ENCODE measurements at regions of chr11 and their contacts with region 1.

Region 1: GRCh38 chr11:102940714-102941588 is 14.6 kb downstream of the MMP13 start:
- DNase-seq: peak; percentile 62
- ATAC-seq: peak; percentile 41
- H3K4me3 ChIP-seq: no peak overlapping the region
- H3K4me3 Mint-ChIP-seq: no peak overlapping the region
- H3K27ac ChIP-seq: no peak overlapping the region
- H3K27ac Mint-ChIP-seq: no peak overlapping the region
- H3K4me1 ChIP-seq: no peaks in the 10 kb centered on the region
- H3K4me1 Mint-ChIP-seq: no peaks in the 10 kb centered on the region
- H3K27me3 ChIP-seq: peaks cover 0 to 5% (median 0%) of the 10 kb centered on the region in 4 experiments
- H3K27me3 Mint-ChIP-seq: peaks cover 5% of the 10 kb centered on the region
- CTCF ChIP-seq: peak; percentile 92

Region 2: DNA sequence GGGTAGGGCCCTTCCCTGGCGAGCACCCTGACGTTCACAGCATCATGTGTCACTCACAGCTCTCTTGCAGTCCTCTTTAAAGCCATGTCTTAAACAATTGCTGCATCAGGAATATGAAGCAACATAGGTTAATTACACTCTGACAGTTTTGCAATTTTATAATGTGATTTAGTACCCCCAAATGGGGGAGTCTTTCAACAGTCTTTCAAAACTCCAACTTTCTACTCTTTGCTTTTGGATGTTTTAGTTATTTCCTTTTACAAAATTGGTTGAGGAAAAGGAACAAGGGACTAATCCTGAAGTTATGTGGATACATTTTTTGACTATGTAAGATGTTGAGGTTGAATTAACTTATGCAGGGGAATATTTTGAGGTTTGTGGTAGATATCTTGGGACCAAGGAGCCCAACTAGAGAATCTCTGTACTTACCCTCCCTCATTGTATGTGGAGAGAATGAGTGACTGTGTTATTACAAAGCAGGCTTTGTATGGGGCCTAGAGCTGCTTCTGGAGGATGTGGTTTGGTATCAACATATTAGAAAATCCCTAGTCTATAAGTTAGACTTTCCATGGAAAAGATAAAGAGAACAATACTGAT is 215.9 kb before region 1 on chr11 and contains the start of gene MMP8:
- CTCF ChIA-PET with region 1: no interaction called
- POLR2A ChIA-PET with region 1: no interaction called
- intact Hi-C with region 1: loop called (anchors 5 kb)
- DNase-seq: no peak
- ATAC-seq: no peak
- H3K4me3 ChIP-seq: no peak within 1 kb of the TSS
- H3K4me3 Mint-ChIP-seq: no peak within 1 kb of the TSS
- H3K27ac ChIP-seq: no peak within 1 kb of the TSS
- H3K27ac Mint-ChIP-seq: no peak within 1 kb of the TSS
- H3K4me1 ChIP-seq: no peaks in the 10 kb centered on the region
- H3K4me1 Mint-ChIP-seq: no peaks in the 10 kb centered on the region
- H3K27me3 ChIP-seq: peaks cover 0 to 3% (median 0%) of the 10 kb centered on the region in 4 experiments
- H3K27me3 Mint-ChIP-seq: peaks cover 2% of the 10 kb centered on the region
- CTCF ChIP-seq: no peak
- total RNA-seq, gene MMP8: not detected in 2 replicates

Region 3: GRCh38 chr11:102914238-102915043 is 26.5 kb before region 1 on chr11:
- CTCF ChIA-PET with region 1: interaction called, 10 read pairs
- POLR2A ChIA-PET with region 1: no interaction called
- intact Hi-C with region 1: loop called (anchors 2 kb)
- DNase-seq: peak; percentile 18
- ATAC-seq: no peak
- H3K4me3 ChIP-seq: no peak overlapping the region
- H3K4me3 Mint-ChIP-seq: no peak overlapping the region
- H3K27ac ChIP-seq: no peak overlapping the region
- H3K27ac Mint-ChIP-seq: no peak overlapping the region
- H3K4me1 ChIP-seq: no peaks in the 10 kb centered on the region
- H3K4me1 Mint-ChIP-seq: no peaks in the 10 kb centered on the region
- H3K27me3 ChIP-seq: peaks cover 0 to 9% (median 1%) of the 10 kb centered on the region in 4 experiments
- H3K27me3 Mint-ChIP-seq: peaks cover 10% of the 10 kb centered on the region
- CTCF ChIP-seq: peak; percentile 40

Region 4: DNA sequence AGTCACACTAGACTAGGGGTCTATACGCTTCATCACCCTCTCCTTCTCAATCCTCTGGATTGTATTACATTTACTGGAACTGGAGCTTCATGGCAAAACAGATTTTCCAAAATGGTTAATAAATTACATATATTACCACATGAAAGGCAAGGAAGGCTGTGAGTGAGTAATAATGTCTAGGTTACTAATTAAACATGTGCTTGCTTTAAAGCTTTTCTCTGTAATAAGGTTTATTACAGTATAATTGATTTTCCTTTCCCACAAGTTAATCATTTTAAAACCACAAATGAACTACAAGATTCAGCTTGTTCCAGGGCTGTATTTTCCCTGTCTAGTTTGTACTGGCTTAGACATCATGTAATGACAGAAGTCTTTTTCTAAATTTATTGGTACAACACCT is 11.0 kb before region 1 on chr11:
- CTCF ChIA-PET with region 1: interaction called, 21 read pairs
- POLR2A ChIA-PET with region 1: no interaction called
- intact Hi-C with region 1: no loop called
- DNase-seq: no peak
- ATAC-seq: no peak
- H3K4me3 ChIP-seq: no peak overlapping the region
- H3K4me3 Mint-ChIP-seq: no peak overlapping the region
- H3K27ac ChIP-seq: no peak overlapping the region
- H3K27ac Mint-ChIP-seq: no peak overlapping the region
- H3K4me1 ChIP-seq: peaks cover 0 to 3% of the 10 kb centered on the region in 2 donors
- H3K4me1 Mint-ChIP-seq: peaks cover 1% of the 10 kb centered on the region
- H3K27me3 ChIP-seq: peaks cover 0 to 4% (median 2%) of the 10 kb centered on the region in 4 experiments
- H3K27me3 Mint-ChIP-seq: peaks cover 5% of the 10 kb centered on the region
- CTCF ChIP-seq: no peak

Region 5: DNA sequence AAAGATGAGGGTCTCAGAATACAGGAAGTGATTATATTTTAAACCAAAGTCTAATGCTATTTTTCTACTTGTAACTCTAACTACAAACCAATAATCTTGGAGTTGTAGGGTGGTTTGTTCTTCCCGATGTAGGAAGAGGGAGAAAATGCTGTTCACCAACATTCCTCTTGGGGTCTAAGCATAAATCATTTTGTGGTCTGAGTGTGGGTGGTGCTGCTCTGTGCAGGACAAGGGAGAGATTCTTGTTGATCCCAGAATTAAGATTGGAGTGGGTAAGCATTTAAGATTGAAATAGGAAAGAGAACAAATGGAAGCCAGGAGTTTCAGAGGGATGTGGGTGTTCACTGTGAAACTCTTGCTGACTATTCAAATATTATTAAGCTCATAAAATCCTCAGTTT is 53.2 kb after region 1 on chr11:
- CTCF ChIA-PET with region 1: no interaction called
- POLR2A ChIA-PET with region 1: no interaction called
- intact Hi-C with region 1: no loop called
- DNase-seq: no peak
- ATAC-seq: no peak
- H3K4me3 ChIP-seq: no peak overlapping the region
- H3K4me3 Mint-ChIP-seq: no peak overlapping the region
- H3K27ac ChIP-seq: no peak overlapping the region
- H3K27ac Mint-ChIP-seq: no peak overlapping the region
- H3K4me1 ChIP-seq: no peaks in the 10 kb centered on the region
- H3K4me1 Mint-ChIP-seq: no peaks in the 10 kb centered on the region
- H3K27me3 ChIP-seq: peaks cover 0 to under 1% (median 0%) of the 10 kb centered on the region in 4 experiments
- H3K27me3 Mint-ChIP-seq: peaks cover 24% of the 10 kb centered on the region
- CTCF ChIP-seq: no peak

Measured in B cell (primary cell).